Activated CD4-positive, alpha-beta memory T cell treated with anti-CD3 and anti-CD28 coated beads for 36 hours (primary cell): ENCODE measurements at regions of chr17 and their contacts with region 1.

Region 1: GRCh38 chr17:50200457-50201275 is 765 bp downstream of the COL1A1 start:
- DNase-seq: peak; percentile 89
- H3K4me3 Mint-ChIP-seq: peak overlapping the region; percentile 67
- H3K27ac Mint-ChIP-seq: no peak overlapping the region
- H3K4me1 Mint-ChIP-seq: peaks cover 19% of the 10 kb centered on the region
- H3K27me3 Mint-ChIP-seq: peaks cover 49% of the 10 kb centered on the region

Region 2: GRCh38 chr17:50020841-50021599 is 179.6 kb before region 1 on chr17:
- CTCF ChIA-PET with region 1: no interaction called
- POLR2A ChIA-PET with region 1: no interaction called
- intact Hi-C with region 1: no loop called
- DNase-seq: no peak
- H3K4me3 Mint-ChIP-seq: no peak overlapping the region
- H3K27ac Mint-ChIP-seq: no peak overlapping the region
- H3K4me1 Mint-ChIP-seq: no peaks in the 10 kb centered on the region
- H3K27me3 Mint-ChIP-seq: peaks cover 9% of the 10 kb centered on the region

Region 3: DNA sequence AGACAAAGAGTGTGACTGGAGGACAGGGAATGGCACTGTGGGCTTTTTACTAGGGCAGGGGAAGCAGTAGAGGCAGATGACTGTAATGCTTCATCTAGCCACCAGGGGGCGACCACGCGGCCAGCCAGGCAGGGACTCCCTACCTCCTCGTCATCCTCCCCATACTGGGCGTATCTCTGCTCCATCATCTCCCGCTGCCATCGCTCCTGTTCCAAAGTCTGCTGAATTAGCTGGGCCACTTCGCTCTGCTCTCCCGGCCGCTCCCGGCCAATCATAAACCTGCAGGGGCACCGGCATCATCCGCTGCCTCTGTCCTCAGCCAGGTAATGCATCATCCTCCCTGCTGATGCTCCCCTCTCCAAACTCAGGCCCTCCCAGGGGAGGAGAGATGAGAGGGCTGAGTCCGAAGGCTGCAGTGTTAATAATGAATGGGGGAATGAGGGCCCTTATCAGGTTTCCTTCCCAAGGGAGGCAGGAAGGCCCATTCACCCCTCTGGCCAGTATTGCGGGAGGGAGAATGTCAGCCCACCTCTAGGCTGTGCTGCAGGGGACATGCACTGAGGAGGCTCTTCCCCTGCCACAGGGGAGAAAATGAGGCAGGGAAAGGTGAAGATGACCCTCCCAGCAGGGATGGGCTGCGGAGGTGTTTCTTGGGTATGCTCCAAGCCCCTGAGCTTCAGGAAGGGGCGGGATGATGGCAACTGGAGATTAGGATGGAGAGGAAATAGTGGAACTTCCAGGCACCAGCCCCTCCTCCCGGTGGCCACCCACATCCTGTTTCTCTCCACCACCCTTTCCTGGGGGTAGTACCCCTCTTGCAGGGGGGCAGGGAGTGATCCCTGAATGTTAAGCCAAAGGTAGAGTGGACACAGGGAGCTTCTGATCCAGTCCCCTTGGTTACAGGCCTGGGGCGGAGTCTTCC is 60.5 kb before region 1 on chr17:
- CTCF ChIA-PET with region 1: interaction called, 12 read pairs
- POLR2A ChIA-PET with region 1: no interaction called
- intact Hi-C with region 1: no loop called
- DNase-seq: peak; percentile 89
- H3K4me3 Mint-ChIP-seq: peak overlapping the region; percentile 55
- H3K27ac Mint-ChIP-seq: peak overlapping the region; percentile 77
- H3K4me1 Mint-ChIP-seq: peaks cover 58% of the 10 kb centered on the region
- H3K27me3 Mint-ChIP-seq: no peaks in the 10 kb centered on the region

Region 4: GRCh38 chr17:50177983-50178834 is 22.5 kb before region 1 on chr17:
- CTCF ChIA-PET with region 1: interaction called, 12 read pairs
- POLR2A ChIA-PET with region 1: no interaction called
- intact Hi-C with region 1: no loop called
- DNase-seq: peak; percentile 70
- H3K4me3 Mint-ChIP-seq: no peak overlapping the region
- H3K27ac Mint-ChIP-seq: no peak overlapping the region
- H3K4me1 Mint-ChIP-seq: peaks cover 9% of the 10 kb centered on the region
- H3K27me3 Mint-ChIP-seq: no peaks in the 10 kb centered on the region

Region 5: DNA sequence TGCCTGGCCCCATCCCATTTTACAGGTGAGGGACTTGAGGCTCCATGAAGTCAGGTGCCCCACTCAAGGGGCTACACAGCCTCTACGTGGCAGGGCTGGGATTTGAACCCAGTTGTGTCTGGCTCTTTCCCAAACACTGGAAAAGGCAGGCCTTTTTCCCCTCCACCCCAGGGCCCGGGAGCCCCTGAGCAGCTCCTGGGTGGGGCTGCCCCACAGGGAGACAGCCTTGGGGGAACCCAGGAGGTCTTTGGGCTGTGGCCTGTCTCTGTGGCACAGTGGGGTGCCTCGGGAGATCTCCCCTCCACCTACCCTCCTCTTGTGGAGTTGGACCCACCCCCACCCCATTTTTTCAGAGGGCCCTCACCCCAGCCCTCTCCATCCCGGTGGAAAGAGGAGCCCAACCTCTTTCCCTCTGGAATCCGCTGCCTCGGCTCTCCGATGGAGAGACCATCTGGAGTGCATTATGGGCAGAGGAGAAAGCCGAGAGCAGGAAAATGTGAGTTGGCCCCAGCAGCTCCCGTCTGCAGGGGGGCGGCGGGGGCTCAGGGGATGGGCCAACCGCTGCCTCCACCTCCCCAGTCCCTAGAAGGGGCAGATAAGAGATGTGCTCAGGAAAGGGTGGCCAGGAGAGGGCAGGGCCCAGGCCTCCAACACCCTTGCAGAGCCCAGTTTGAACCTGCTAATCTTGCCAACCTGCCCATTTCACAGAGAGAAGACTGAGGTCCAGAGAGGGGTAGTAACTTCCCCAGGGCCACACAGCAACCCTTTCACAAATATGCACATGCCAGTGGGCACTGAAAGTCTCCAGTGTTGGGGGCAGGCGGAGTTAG is 58.2 kb after region 1 on chr17:
- CTCF ChIA-PET with region 1: no interaction called
- POLR2A ChIA-PET with region 1: no interaction called
- intact Hi-C with region 1: no loop called
- DNase-seq: no peak
- H3K4me3 Mint-ChIP-seq: no peak overlapping the region
- H3K27ac Mint-ChIP-seq: no peak overlapping the region
- H3K4me1 Mint-ChIP-seq: no peaks in the 10 kb centered on the region
- H3K27me3 Mint-ChIP-seq: peaks cover 10% of the 10 kb centered on the region

Region 6: DNA sequence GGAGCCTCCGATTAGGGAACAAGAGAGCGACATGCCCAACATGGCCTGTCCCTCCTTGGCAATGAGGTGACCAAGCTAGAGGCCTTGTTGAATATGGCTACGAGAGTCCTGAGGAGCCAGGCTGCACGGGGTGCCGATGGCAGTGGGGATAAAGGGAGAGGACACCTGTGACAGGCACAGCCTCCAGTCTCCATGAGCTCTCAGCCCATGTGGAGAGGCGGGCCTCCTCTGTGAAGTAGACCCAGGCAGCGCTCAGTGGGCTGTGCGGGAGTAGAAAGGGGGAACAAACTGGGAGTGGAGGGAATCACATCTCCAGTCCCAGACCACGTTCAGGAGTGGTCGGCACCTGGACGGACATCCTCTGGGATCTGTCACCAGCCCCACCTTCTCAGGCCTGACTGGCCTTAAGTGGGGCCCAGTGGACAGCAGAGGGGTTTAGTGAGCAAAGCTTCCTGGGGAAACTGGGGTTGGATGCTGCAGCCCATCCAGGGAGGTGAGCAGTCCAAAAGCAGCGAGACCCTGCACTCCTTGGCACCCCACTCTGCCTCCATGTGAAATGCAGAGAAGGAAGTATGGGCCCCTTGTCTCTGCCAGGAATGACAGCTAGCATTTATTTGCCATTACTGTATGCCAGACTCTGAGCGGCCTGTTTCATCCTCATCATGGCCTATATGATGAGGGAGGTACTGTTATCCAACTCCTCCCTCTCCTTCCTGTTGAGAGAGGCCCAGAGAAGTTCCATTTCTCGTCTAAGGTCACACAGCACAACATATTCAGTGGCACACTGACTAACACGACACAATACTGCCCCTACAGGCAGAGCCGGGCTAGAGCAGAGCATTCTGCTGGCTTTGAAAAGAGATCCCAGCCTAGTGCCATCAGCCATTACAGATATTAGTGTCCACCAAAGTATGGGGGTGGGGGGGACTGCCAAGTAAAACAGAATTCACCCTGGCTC is 69.1 kb after region 1 on chr17:
- CTCF ChIA-PET with region 1: interaction called, 324 read pairs
- POLR2A ChIA-PET with region 1: no interaction called
- intact Hi-C with region 1: loop called (anchors 1 kb)
- DNase-seq: peak; percentile 79
- H3K4me3 Mint-ChIP-seq: no peak overlapping the region
- H3K27ac Mint-ChIP-seq: no peak overlapping the region
- H3K4me1 Mint-ChIP-seq: peaks cover 5% of the 10 kb centered on the region
- H3K27me3 Mint-ChIP-seq: peaks cover 15% of the 10 kb centered on the region

Region 7: GRCh38 chr17:50331085-50331791 is 130.6 kb after region 1 on chr17:
- CTCF ChIA-PET with region 1: interaction called, 5 read pairs
- POLR2A ChIA-PET with region 1: no interaction called
- intact Hi-C with region 1: loop called (anchors 1 kb)
- DNase-seq: peak; percentile 63
- H3K4me3 Mint-ChIP-seq: no peak overlapping the region
- H3K27ac Mint-ChIP-seq: peak overlapping the region; percentile 74
- H3K4me1 Mint-ChIP-seq: peaks cover 24% of the 10 kb centered on the region
- H3K27me3 Mint-ChIP-seq: peaks cover 9% of the 10 kb centered on the region

Region 8: GRCh38 chr17:50380369-50381259 is 179.9 kb after region 1 on chr17:
- CTCF ChIA-PET with region 1: no interaction called
- POLR2A ChIA-PET with region 1: no interaction called
- intact Hi-C with region 1: no loop called
- DNase-seq: no peak
- H3K4me3 Mint-ChIP-seq: no peak overlapping the region
- H3K27ac Mint-ChIP-seq: no peak overlapping the region
- H3K4me1 Mint-ChIP-seq: no peaks in the 10 kb centered on the region
- H3K27me3 Mint-ChIP-seq: no peaks in the 10 kb centered on the region

Region 9: DNA sequence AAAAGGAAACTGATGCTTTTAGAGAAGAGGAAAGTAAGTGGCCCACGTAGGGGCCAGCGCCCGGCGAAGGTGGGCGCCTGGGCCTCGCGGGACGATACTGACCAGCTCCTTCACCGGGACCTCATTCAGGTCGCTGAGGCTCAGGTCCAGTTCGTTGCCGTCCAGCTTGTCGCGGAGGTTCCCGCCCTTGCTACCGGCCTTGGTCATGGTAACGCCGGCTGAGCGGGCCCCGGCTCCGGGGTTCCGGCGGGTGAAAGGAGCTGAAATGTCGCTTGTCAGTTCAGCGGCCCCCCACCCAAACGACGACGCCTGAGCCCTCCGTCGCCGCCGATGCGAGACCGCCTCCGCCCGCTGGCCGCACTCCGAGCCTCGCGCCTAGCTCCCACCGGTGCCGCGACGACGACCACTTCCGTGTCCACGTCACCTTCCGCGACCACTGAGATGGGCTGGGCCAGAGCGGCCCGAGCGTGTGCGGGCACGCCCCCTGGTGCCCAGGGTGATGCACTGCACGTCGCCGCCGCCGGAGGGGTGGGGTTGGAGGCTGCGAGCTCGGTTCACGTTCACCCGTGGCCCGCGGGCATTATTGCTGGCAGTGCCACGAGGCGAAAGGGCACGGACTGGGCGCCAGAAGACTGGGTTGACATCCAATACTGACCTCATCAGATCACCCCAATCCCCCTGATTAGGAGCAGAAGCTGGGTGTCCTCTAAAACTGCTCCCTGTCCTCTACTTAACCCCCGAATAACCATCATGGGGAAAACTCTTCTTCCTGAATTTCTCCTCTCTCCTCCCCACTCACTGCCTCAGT is 196.6 kb after region 1 on chr17 and contains the start of gene LRRC59:
- CTCF ChIA-PET with region 1: interaction called, 13 read pairs
- POLR2A ChIA-PET with region 1: no interaction called
- intact Hi-C with region 1: no loop called
- DNase-seq: peak; percentile 95
- H3K4me3 Mint-ChIP-seq: peak within 1 kb of the TSS; percentile 94
- H3K27ac Mint-ChIP-seq: peak within 1 kb of the TSS; percentile 82
- H3K4me1 Mint-ChIP-seq: peaks cover 27% of the 10 kb centered on the region
- H3K27me3 Mint-ChIP-seq: no peaks in the 10 kb centered on the region
- total RNA-seq, gene LRRC59: 77.1 to 78.8 TPM